ENCODE measurements at regions of chr1 and their contacts with region 1.

Region 1: DNA sequence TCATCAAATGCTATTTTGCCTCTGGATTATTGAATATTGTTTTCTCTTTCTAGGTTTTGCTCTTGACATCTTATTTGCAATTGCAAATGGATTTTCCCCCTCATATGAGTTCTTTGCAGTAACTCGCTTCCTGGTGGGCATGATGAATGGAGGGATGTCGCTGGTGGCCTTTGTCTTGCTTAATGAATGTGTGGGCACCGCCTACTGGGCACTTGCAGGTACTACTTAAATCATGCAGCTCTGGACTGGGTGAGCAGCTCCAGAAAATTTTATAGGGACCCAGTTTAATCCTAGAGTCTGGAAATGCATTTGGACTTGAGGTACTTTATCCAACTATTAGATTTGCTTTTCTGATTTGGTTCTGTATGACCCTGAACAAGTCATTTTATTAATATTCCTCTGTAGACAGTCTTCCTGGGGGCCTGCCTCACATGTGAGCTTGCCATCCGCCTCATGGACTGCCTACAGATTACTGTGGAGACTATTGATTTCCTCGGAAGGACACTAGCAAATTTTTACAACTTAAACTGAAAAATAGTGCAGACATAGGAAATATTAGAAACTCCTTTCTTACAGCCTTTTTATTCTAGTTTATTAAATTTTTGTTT is 44.5 kb downstream of the SLC22A15 start:
- DNase-seq: peak; percentile 65
- ATAC-seq: peak; percentile 86
- H3K4me3 Mint-ChIP-seq: no peak overlapping the region
- H3K27ac Mint-ChIP-seq: no peak overlapping the region
- H3K4me1 Mint-ChIP-seq: peaks cover 2% of the 10 kb centered on the region
- H3K27me3 Mint-ChIP-seq: no peaks in the 10 kb centered on the region

Region 2: GRCh38 chr1:115807723-115808122 is 213.0 kb before region 1 on chr1:
- CTCF ChIA-PET with region 1: interaction called, 13 read pairs
- DNase-seq: peak; percentile 61
- ATAC-seq: no peak
- H3K4me3 Mint-ChIP-seq: no peak overlapping the region
- H3K27ac Mint-ChIP-seq: no peak overlapping the region
- H3K4me1 Mint-ChIP-seq: peaks cover 1% of the 10 kb centered on the region
- H3K27me3 Mint-ChIP-seq: peaks cover 5% of the 10 kb centered on the region

Region 3: DNA sequence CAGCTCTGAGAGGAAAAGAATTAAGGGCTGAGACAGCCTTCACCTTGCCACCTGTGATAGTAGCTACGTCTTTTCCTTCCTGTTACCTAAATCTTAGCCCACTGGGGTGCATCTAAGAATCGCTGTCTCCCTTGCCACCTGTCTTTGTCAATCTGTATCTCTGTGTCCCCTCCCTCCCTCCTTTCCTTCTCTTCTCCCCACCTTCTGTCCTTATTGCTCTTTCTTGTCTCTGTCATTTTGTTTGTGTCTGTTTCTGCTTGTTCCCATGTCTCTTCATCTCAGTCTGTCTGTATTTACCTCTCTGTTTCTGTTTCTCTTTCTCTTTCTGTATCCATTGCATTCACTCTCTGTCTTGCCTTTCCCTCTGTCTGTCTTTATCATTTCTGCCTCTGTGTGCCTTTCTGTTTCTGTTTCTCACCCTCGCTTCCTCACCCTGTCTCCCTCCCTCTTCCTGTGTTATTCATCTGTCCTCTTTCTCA is 14.2 kb before region 1 on chr1:
- CTCF ChIA-PET with region 1: interaction called, 13 read pairs
- DNase-seq: no peak
- ATAC-seq: peak; percentile 94
- H3K4me3 Mint-ChIP-seq: peak overlapping the region; percentile 79
- H3K27ac Mint-ChIP-seq: peak overlapping the region; percentile 87
- H3K4me1 Mint-ChIP-seq: peaks cover 15% of the 10 kb centered on the region
- H3K27me3 Mint-ChIP-seq: peaks cover under 1% of the 10 kb centered on the region

Region 4: GRCh38 chr1:116033322-116033721 is 12.6 kb after region 1 on chr1:
- CTCF ChIA-PET with region 1: interaction called, 16 read pairs
- DNase-seq: no peak
- ATAC-seq: no peak
- H3K4me3 Mint-ChIP-seq: no peak overlapping the region
- H3K27ac Mint-ChIP-seq: no peak overlapping the region
- H3K4me1 Mint-ChIP-seq: no peaks in the 10 kb centered on the region
- H3K27me3 Mint-ChIP-seq: peaks cover 8% of the 10 kb centered on the region

Measured in activated CD8-positive, alpha-beta memory T cell treated with anti-CD3 and anti-CD28 coated beads, Interleukin-2, amount 10 ng/mL, durations not matched to agents 7 days and 5 days (primary cell).